ENCODE measurements at regions of chr20 and their contacts with region 1.

Region 1: GRCh38 chr20:10511509-10512251 is 76.6 kb downstream of the SLX4IP start:
- DNase-seq: peak; percentile 87
- H3K4me3 Mint-ChIP-seq: no peak overlapping the region
- H3K27ac Mint-ChIP-seq: peak overlapping the region; percentile 66
- H3K4me1 Mint-ChIP-seq: peaks cover 24% of the 10 kb centered on the region
- H3K27me3 Mint-ChIP-seq: no peaks in the 10 kb centered on the region

Region 2: GRCh38 chr20:10350188-10350842 is 161.4 kb before region 1 on chr20:
- CTCF ChIA-PET with region 1: no interaction called
- POLR2A ChIA-PET with region 1: no interaction called
- intact Hi-C with region 1: loop called (anchors 2 kb)
- DNase-seq: no peak
- H3K4me3 Mint-ChIP-seq: no peak overlapping the region
- H3K27ac Mint-ChIP-seq: peak overlapping the region; percentile 75
- H3K4me1 Mint-ChIP-seq: peaks cover 30% of the 10 kb centered on the region
- H3K27me3 Mint-ChIP-seq: no peaks in the 10 kb centered on the region

Region 3: GRCh38 chr20:10447027-10447426 is 64.7 kb before region 1 on chr20:
- CTCF ChIA-PET with region 1: no interaction called
- POLR2A ChIA-PET with region 1: no interaction called
- intact Hi-C with region 1: loop called (anchors 1 kb)
- DNase-seq: peak; percentile 71
- H3K4me3 Mint-ChIP-seq: peak overlapping the region; percentile 65
- H3K27ac Mint-ChIP-seq: peak overlapping the region; percentile 65
- H3K4me1 Mint-ChIP-seq: peaks cover 20% of the 10 kb centered on the region
- H3K27me3 Mint-ChIP-seq: no peaks in the 10 kb centered on the region

Region 4: GRCh38 chr20:10476319-10476724 is 35.4 kb before region 1 on chr20:
- CTCF ChIA-PET with region 1: interaction called, 3 read pairs
- POLR2A ChIA-PET with region 1: no interaction called
- intact Hi-C with region 1: loop called (anchors 1 kb)
- DNase-seq: peak; percentile 20
- H3K4me3 Mint-ChIP-seq: no peak overlapping the region
- H3K27ac Mint-ChIP-seq: no peak overlapping the region
- H3K4me1 Mint-ChIP-seq: peaks cover 18% of the 10 kb centered on the region
- H3K27me3 Mint-ChIP-seq: no peaks in the 10 kb centered on the region

Region 5: DNA sequence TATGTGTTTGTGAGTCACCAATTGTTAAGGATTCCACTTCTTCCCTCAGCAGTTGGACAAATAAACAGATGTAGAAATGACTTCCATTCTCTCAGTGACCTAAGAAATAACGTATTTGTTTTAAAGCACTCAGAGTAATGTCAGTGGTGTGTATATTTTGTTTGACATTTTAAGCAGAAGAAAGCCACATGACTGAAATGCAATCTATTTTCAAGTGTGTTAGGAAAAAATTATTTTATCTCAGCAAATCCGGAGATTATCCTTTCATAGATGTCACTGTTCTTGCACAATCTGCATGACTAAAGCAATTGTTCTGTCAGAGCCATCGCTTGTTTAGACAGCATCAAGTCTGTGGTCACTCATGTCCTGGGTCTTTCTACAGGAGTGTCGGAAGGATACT is 85.0 kb after region 1 on chr20:
- CTCF ChIA-PET with region 1: no interaction called
- POLR2A ChIA-PET with region 1: interaction called, 3 read pairs
- intact Hi-C with region 1: loop called (anchors 2 kb)
- DNase-seq: no peak
- H3K4me3 Mint-ChIP-seq: no peak overlapping the region
- H3K27ac Mint-ChIP-seq: no peak overlapping the region
- H3K4me1 Mint-ChIP-seq: peaks cover 12% of the 10 kb centered on the region
- H3K27me3 Mint-ChIP-seq: no peaks in the 10 kb centered on the region

Region 6: DNA sequence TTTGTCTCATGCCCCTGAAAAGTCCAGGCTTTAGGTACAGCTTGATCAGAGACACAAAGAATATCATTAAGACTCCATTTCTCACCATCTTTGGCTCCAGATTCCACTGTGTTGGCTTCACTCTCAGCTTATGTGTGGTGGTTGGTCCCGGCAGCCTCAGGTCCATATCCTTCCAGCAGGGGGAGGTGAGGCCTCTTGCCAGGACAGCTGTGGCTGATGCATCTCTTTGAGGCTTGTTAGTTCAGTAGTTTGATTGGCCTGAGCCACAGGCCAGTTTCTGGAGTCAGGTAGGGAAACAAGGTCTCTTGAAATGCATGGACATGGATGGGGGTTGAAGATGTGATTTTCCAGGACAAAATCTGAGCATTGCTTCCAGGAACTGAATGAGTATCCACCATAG is 99.7 kb after region 1 on chr20:
- CTCF ChIA-PET with region 1: no interaction called
- POLR2A ChIA-PET with region 1: no interaction called
- intact Hi-C with region 1: no loop called
- DNase-seq: peak; percentile 25
- H3K4me3 Mint-ChIP-seq: no peak overlapping the region
- H3K27ac Mint-ChIP-seq: no peak overlapping the region
- H3K4me1 Mint-ChIP-seq: no peaks in the 10 kb centered on the region
- H3K27me3 Mint-ChIP-seq: no peaks in the 10 kb centered on the region

Region 7: GRCh38 chr20:10673988-10674711 is 162.5 kb after region 1 on chr20 and contains the start of gene JAG1:
- CTCF ChIA-PET with region 1: no interaction called
- POLR2A ChIA-PET with region 1: no interaction called
- intact Hi-C with region 1: loop called (anchors 5 kb)
- DNase-seq: peak; percentile 77
- H3K4me3 Mint-ChIP-seq: peak within 1 kb of the TSS; percentile 79
- H3K27ac Mint-ChIP-seq: no peak within 1 kb of the TSS
- H3K4me1 Mint-ChIP-seq: peaks cover 26% of the 10 kb centered on the region
- H3K27me3 Mint-ChIP-seq: peaks cover 71% of the 10 kb centered on the region
- total RNA-seq, gene JAG1: 0.15 to 0.40 TPM

Measured in activated CD4-positive, alpha-beta memory T cell treated with anti-CD3 and anti-CD28 coated beads for 36 hours (primary cell).